Endothelial cell of umbilical vein (primary cell): ENCODE measurements at regions of chr4 and their contacts with region 1.

Region 1: GRCh38 chr4:139808808-139809756 is 143.5 kb downstream of the MGST2 start:
- DNase-seq: peak; percentile 81
- H3K4me3 ChIP-seq: no peak overlapping the region
- H3K27ac ChIP-seq: peak overlapping the region; percentile 18
- H3K4me1 ChIP-seq: peaks cover 9% of the 10 kb centered on the region
- H3K27me3 ChIP-seq: no peaks in the 10 kb centered on the region
- CTCF ChIP-seq: no peak
- POLR2A ChIP-seq: no peak

Region 2: DNA sequence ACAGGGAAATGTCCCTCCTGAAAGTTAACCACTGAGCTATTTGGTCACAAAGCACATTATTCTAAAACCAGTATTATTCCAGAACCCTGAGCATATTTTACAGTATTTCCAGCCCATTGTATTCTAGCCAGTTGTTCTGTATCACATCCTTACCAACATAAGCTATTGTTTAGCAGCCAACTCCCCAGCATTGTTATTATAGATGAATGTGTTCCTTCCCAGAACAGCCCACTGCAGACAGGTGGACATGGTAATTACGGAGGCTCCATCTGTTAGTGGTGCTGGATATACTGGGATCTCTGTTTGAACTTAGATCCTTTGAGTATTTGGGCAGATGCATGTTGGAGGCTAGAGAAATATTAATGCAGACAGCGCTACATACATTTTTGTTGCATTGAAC is 17.4 kb before region 1 on chr4:
- CTCF ChIA-PET with region 1: interaction called, 10 read pairs
- POLR2A ChIA-PET with region 1: interaction called, 11 read pairs
- dilution Hi-C with region 1: no loop called
- intact Hi-C with region 1: no loop called
- DNase-seq: peak; percentile 78
- H3K4me3 ChIP-seq: no peak overlapping the region
- H3K27ac ChIP-seq: peak overlapping the region; percentile 52
- H3K4me1 ChIP-seq: peaks cover 25% of the 10 kb centered on the region
- H3K27me3 ChIP-seq: no peaks in the 10 kb centered on the region
- CTCF ChIP-seq: no peak
- POLR2A ChIP-seq: no peak